ENCODE measurements at regions of chr3 and their contacts with region 1.

Region 1: GRCh38 chr3:126850370-126851085 is 132.4 kb upstream of the PLXNA1 start:
- DNase-seq: peak; percentile 56
- H3K4me3 ChIP-seq: no peak overlapping the region
- H3K27ac ChIP-seq: peak overlapping the region; percentile 71
- H3K27me3 ChIP-seq: no peaks in the 10 kb centered on the region
- CTCF ChIP-seq: no peak

Region 2: DNA sequence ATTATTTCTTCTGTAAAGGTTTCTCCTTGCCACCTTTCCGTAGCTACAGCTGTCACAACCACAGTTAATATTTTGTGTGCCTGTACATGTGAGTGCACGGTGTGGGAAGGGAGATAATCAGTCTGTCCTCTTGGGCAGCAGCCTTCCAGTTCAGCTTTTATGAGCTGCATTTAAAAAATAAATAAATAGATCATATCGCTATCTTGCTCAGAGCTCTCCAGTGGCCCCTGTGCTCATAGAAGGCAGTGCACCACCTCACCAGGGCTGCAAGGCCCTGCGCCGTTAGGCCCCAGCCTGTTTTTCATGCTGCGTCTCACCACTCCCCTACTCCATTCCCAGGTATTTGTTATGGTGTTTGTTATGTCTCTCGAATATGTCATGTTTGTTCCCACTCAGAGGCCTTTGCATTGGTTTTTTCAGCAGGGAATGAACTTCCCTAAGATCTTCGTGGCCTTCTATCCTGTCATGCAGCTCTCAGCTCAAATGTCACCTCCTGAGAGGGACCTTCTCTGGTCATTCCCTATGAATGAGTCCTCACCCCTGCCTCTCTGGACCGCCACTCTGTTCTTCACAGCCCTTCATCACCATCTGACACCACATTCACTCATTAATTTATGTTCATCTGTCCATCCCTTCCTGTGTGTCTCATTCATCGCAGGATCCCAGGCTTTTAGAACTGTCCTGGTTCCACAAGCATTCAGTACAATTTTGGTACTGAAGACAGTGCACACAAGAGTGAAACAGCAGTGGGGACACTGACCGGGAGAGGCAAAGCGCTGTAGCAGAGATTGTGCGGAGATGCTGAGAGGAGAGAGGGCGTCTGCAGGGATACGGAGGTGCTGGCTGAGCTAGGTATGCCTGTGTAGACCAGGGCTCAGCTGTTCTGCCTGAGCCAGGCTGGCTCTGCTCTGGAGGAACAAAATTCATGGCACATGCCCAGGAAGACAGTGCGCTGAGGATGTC is 14.3 kb before region 1 on chr3:
- CTCF ChIA-PET with region 1: interaction called, 12 read pairs
- POLR2A ChIA-PET with region 1: interaction called, 4 read pairs
- DNase-seq: peak; percentile 13
- H3K4me3 ChIP-seq: no peak overlapping the region
- H3K27ac ChIP-seq: peak overlapping the region; percentile 68
- H3K27me3 ChIP-seq: no peaks in the 10 kb centered on the region
- CTCF ChIP-seq: peak; percentile 58